Vagina (tissue), 2 donors: ENCODE measurements at regions of chr3 and their contacts with region 1.

Region 1: GRCh38 chr3:179071550-179072397 is at the start of gene ZMAT3:
- DNase-seq: peak in 1 of 2 donors; percentile 88
- H3K4me3 ChIP-seq: peak within 1 kb of the TSS; percentile 66 to 92
- H3K27ac ChIP-seq: peak within 1 kb of the TSS; percentile 79
- H3K4me1 ChIP-seq: peaks cover 21% of the 10 kb centered on the region
- H3K27me3 ChIP-seq: no peaks in the 10 kb centered on the region
- CTCF ChIP-seq: no peak
- POLR2A ChIP-seq: peak in 1 of 2 donors; percentile 28
- total RNA-seq, gene ZMAT3: 9.6 TPM

Region 2: GRCh38 chr3:179091113-179091512 is 19.3 kb after region 1 on chr3:
- intact Hi-C with region 1: no loop called
- DNase-seq: no peak
- H3K4me3 ChIP-seq: no peak overlapping the region
- H3K27ac ChIP-seq: no peak overlapping the region
- H3K4me1 ChIP-seq: no peaks in the 10 kb centered on the region
- H3K27me3 ChIP-seq: no peaks in the 10 kb centered on the region
- CTCF ChIP-seq: no peak
- POLR2A ChIP-seq: no peak

Region 3: DNA sequence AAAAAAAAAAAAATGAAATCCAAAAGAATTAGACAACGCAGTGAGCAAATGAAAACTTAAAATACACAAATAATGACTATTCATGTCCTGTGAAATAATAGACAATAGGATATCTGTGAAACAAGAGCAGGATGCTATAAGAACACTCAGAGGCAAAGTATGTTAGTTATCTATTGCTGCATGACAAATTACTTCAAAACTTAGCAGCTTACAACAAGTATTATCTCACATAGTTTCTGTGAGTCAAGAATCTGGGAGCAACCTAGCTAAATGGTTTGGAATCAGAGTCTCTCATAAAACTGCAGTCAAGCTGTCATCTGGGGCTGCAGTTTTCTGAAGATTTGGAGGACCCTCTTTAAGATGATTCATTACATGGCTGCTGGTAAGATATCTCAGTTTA is 36.3 kb after region 1 on chr3:
- intact Hi-C with region 1: no loop called
- DNase-seq: no peak
- H3K4me3 ChIP-seq: no peak overlapping the region
- H3K27ac ChIP-seq: no peak overlapping the region
- H3K4me1 ChIP-seq: no peaks in the 10 kb centered on the region
- H3K27me3 ChIP-seq: no peaks in the 10 kb centered on the region
- CTCF ChIP-seq: no peak
- POLR2A ChIP-seq: no peak

Region 4: GRCh38 chr3:179624451-179624850 is 552.7 kb after region 1 on chr3:
- intact Hi-C with region 1: no loop called
- DNase-seq: no peak
- H3K4me3 ChIP-seq: no peak overlapping the region
- H3K27ac ChIP-seq: no peak overlapping the region
- H3K4me1 ChIP-seq: no peaks in the 10 kb centered on the region
- H3K27me3 ChIP-seq: no peaks in the 10 kb centered on the region
- CTCF ChIP-seq: no peak
- POLR2A ChIP-seq: no peak

Region 5: DNA sequence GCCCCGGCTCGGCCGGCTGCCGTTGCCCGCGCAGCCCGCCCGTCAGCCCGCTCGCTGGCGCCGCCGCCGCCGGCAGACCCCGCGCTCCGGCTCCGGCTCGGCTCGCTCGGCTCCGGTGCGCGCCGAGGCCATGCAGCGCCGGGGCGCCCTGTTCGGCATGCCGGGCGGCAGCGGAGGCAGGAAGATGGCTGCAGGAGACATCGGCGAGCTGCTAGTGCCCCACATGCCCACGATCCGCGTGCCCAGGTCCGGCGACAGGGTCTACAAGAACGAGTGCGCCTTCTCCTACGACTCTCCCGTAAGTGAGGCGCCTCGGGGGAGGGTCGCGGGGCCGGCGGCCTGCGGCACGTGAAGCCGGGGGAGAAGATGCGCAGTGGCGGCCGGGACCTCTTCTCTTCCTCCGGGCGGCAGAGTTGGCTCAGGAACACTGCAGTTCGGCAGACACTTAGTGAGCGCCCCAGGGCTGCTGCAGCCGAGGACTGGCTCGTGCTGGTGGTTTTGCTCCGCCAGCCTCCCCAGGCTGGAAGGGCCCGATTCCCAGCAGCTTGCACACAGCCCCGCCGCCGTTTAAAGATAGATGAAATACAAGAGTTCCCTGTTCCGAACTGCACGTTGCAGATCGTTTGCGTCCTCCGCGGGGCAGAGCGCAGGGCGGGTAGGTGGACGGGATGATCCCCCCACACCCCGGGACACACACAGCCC is 581.5 kb after region 1 on chr3:
- intact Hi-C with region 1: loop called (anchors 5 kb)
- DNase-seq: no peak
- H3K4me3 ChIP-seq: peak overlapping the region; percentile 69 to 76
- H3K27ac ChIP-seq: peak overlapping the region; percentile 90
- H3K4me1 ChIP-seq: peaks cover 11% of the 10 kb centered on the region
- H3K27me3 ChIP-seq: no peaks in the 10 kb centered on the region
- CTCF ChIP-seq: no peak
- POLR2A ChIP-seq: no peak